ENCODE measurements at regions of chr2 and their contacts with region 1.

Region 1: GRCh38 chr2:27963472-27963871 is 72.9 kb downstream of the BABAM2 start:
- DNase-seq: no peak
- ATAC-seq: no peak
- H3K4me3 ChIP-seq: no peak overlapping the region
- H3K27ac ChIP-seq: no peak overlapping the region
- H3K4me1 ChIP-seq: no peaks in the 10 kb centered on the region
- H3K27me3 ChIP-seq: no peaks in the 10 kb centered on the region
- CTCF ChIP-seq: no peak

Region 2: GRCh38 chr2:28155627-28156026 is 192.2 kb after region 1 on chr2:
- CTCF ChIA-PET with region 1: no interaction called
- POLR2A ChIA-PET with region 1: interaction called, 11 read pairs
- in situ Hi-C with region 1: no loop called
- intact Hi-C with region 1: no loop called
- DNase-seq: no peak
- ATAC-seq: no peak
- H3K4me3 ChIP-seq: no peak overlapping the region
- H3K27ac ChIP-seq: no peak overlapping the region
- H3K4me1 ChIP-seq: peaks cover 7% of the 10 kb centered on the region; the same call in 1 of the 2 replicates
- H3K27me3 ChIP-seq: no peaks in the 10 kb centered on the region
- CTCF ChIP-seq: peak; percentile 73

Measured in Panc1 (cell line).